ENCODE measurements at regions of chr20 and their contacts with region 1.

Region 1: DNA sequence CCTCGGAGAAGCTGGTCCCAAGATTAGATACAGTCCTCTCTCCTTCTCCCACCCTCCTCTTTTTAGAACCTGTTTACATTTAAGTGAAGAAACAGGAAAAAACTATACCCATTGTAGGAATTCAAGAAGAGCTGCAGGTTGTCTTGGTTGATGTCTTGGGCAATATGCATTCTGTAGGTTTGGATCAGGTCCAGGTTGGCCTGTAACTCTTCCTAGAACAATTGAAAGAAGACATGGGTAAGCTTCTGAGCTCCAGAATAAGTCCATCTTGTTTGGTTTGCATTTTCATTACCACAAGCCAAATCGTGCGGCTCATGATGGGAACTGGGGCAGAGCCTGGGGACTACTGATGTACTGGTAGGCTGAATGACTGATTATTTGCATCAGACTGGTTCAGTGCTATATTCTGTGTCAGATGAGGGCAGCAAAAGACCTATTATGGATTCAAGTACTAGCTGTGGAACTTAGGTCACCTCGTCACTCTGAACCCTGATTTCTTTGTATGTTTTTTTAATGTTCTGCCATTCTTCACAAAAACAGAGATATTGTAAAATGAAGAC is 20.3 kb upstream of the SLA2 start:
- DNase-seq: no peak
- H3K4me3 ChIP-seq: no peak overlapping the region
- H3K27ac ChIP-seq: no peak overlapping the region
- H3K4me1 ChIP-seq: no peaks in the 10 kb centered on the region
- H3K27me3 ChIP-seq: no peaks in the 10 kb centered on the region
- CTCF ChIP-seq: peak in 1 of 3 experiments; percentile 22
- EP300 ChIP-seq: no peak
- POLR2A ChIP-seq: no peak

Region 2: GRCh38 chr20:36754656-36755222 is 88.5 kb after region 1 on chr20:
- intact Hi-C with region 1: loop called (anchors 10 kb)
- DNase-seq: no peak
- H3K4me3 ChIP-seq: no peak overlapping the region
- H3K27ac ChIP-seq: peak overlapping the region in 3 of 4 donors; percentile 2 to 50 (median 49)
- H3K4me1 ChIP-seq: peaks cover 7 to 14% (median 8%) of the 10 kb centered on the region in 4 donors
- H3K27me3 ChIP-seq: no peaks in the 10 kb centered on the region
- CTCF ChIP-seq: peak; percentile 74 to 85 (median 81)
- EP300 ChIP-seq: no peak
- POLR2A ChIP-seq: no peak

Measured in esophagus muscularis mucosa (tissue), 4 donors.